Sigmoid colon (tissue), 7 donors: ENCODE measurements at regions of chr9 and their contacts with region 1.

Region 1: DNA sequence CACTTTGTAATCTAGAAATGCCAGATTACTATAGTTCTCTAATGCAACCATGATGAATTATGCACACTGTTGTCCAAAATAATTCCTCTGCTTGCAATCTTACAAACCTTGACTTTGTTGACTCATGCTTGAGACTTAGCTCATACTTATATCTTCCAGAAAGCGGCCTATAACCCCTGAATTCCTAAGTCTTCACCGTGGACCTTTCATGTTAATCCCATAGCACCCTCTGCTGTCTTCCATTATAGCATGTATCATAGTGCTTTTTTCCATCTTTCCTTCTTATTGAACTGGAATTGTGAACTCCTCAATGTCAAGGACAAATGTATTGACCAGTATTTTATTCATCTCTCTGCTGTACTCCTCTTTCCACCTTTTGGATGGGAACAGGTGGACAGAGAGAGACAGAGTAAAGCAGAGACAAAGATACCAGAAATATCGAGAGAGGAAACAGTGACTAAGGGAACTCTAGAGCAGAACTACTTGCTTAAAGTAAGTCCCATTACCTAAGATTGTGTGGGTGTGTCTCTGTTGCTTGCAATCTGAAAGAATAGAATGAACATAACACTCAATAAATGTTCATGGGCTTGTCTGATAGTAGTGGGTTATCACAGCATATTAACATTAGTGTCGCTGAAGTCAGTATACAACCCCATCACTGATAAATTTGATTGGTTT is 110.1 kb downstream of the LURAP1L start:
- DNase-seq: no peak
- H3K4me3 ChIP-seq: no peak overlapping the region
- H3K27ac ChIP-seq: peak overlapping the region in 1 of 4 donors; percentile 12
- H3K4me1 ChIP-seq: peaks cover 0 to 37% (median 24%) of the 10 kb centered on the region in 4 donors
- H3K27me3 ChIP-seq: no peaks in the 10 kb centered on the region
- CTCF ChIP-seq: peak; percentile 58 to 86 (median 68)
- EP300 ChIP-seq: no peak
- POLR2A ChIP-seq: no peak

Region 2: GRCh38 chr9:12723409-12724028 is 161.4 kb before region 1 on chr9:
- intact Hi-C with region 1: loop called (anchors 2 kb)
- DNase-seq: no peak
- H3K4me3 ChIP-seq: no peak overlapping the region
- H3K27ac ChIP-seq: peak overlapping the region in 1 of 4 donors; percentile 28
- H3K4me1 ChIP-seq: peaks cover 0 to 14% (median 0%) of the 10 kb centered on the region in 4 donors
- H3K27me3 ChIP-seq: no peaks in the 10 kb centered on the region
- CTCF ChIP-seq: peak; percentile 15 to 60 (median 53)
- EP300 ChIP-seq: no peak
- POLR2A ChIP-seq: no peak

Region 3: DNA sequence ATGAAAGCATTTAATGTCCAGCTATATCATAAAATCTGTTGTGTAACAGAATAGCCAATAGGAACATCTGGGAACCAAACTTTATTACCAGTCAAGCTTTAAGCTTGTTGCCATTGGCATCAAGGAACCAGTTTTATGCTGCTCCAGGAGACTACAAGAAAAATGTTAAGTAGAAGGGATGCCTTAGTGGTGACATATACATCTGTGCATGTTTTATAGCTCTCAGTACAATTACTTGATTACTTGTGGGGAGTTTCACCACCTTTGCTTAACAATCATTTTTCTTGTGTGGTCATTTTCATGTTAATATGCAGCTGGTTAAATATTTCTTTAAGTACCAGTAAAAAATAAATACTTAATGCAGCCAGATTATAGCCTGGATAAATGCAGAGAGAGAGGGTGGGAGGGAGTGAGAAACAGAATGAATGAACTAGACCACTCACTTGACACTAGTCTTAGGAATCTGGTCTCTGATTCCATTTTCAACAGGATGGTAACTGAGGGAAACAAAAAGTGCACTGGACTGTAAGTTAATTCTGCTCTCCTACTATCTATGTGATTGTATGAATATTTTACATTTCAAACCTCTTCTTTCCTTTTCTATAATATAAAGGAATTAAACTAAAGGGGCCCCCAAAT is 145.7 kb before region 1 on chr9:
- intact Hi-C with region 1: no loop called
- DNase-seq: no peak
- H3K4me3 ChIP-seq: no peak overlapping the region
- H3K27ac ChIP-seq: no peak overlapping the region
- H3K4me1 ChIP-seq: no peaks in the 10 kb centered on the region
- H3K27me3 ChIP-seq: no peaks in the 10 kb centered on the region
- CTCF ChIP-seq: no peak
- EP300 ChIP-seq: no peak
- POLR2A ChIP-seq: no peak

Region 4: DNA sequence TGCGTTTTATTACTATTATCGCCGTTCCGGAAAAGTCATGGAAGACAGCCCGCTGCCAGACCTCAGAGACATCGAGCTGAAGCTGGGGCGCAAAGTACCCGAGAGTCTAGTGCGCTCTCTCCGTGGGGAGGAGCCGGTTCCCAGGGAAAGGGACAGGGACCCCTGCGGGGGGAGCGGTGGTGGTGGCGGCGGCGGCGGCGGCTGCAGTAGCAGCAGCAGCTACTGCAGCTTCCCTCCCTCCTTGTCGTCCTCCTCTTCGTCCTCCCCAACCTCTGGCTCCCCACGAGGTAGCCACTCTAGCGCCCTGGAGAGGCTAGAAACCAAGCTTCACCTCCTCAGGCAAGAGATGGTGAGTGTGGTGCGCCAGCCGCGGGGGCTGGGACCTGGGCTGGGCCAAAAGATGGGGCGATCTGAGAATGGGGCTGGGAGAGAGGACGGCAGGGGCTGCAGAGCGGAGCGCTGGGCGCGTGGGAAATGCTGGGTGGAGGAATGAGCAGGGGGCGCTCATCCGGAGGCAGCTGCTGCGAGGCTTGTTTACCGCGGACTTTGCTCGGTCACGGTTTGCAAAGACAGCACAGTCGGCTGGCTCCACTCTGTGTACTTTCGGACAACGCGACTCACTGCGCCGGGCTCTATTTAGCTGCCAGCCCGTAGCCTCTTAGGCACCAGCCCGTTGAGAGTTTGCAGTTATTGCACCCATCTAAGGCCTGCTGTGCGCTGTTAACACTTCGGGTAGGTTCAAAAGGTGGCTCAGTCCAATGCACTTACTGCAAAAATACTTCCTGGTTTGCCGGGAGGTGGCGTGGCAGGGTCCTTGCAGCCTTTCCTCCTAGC is 109.0 kb before region 1 on chr9:
- intact Hi-C with region 1: loop called (anchors 1 kb)
- DNase-seq: peak; percentile 67
- H3K4me3 ChIP-seq: peak overlapping the region; percentile 76 to 89 (median 82)
- H3K27ac ChIP-seq: peak overlapping the region; percentile 89 to 97 (median 94)
- H3K4me1 ChIP-seq: peaks cover 0 to 38% (median 23%) of the 10 kb centered on the region in 4 donors
- H3K27me3 ChIP-seq: no peaks in the 10 kb centered on the region
- CTCF ChIP-seq: peak; percentile 48 to 59 (median 54)
- EP300 ChIP-seq: no peak
- POLR2A ChIP-seq: no peak

Region 5: DNA sequence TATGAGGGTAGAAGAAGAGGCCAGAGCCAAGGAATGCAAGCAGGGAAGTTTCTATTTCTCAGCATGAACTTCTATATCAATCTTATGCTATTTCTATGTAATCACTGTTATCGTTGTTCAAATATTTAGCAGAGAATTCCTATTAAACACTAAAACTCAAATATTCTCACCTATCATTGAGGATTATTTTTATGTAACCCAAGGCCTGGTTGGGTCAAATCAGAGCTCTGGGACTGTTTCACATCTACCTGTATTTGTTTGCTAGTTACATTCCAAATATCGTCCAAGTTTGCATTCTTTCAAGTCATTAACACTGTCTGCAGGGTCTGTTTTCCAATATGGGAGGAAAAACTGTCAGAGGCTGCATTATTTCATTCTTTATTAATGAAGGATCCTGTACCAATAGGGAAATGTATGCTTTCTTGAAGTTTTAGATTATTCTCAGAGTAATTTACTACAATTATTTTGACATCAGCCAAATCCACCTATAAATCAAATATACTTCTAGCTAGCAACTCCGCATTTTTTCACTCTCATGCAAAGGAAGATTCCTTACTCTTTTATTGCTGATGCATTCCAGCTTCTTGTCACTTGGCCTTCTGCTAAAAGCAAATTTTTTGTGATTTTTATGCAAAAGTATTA is 57.8 kb before region 1 on chr9:
- intact Hi-C with region 1: loop called (anchors 5 kb)
- DNase-seq: no peak
- H3K4me3 ChIP-seq: no peak overlapping the region
- H3K27ac ChIP-seq: peak overlapping the region in 2 of 4 donors; percentile 27 to 28
- H3K4me1 ChIP-seq: peaks cover 0 to 49% (median 22%) of the 10 kb centered on the region in 4 donors
- H3K27me3 ChIP-seq: no peaks in the 10 kb centered on the region
- CTCF ChIP-seq: no peak
- EP300 ChIP-seq: no peak
- POLR2A ChIP-seq: no peak

Region 6: DNA sequence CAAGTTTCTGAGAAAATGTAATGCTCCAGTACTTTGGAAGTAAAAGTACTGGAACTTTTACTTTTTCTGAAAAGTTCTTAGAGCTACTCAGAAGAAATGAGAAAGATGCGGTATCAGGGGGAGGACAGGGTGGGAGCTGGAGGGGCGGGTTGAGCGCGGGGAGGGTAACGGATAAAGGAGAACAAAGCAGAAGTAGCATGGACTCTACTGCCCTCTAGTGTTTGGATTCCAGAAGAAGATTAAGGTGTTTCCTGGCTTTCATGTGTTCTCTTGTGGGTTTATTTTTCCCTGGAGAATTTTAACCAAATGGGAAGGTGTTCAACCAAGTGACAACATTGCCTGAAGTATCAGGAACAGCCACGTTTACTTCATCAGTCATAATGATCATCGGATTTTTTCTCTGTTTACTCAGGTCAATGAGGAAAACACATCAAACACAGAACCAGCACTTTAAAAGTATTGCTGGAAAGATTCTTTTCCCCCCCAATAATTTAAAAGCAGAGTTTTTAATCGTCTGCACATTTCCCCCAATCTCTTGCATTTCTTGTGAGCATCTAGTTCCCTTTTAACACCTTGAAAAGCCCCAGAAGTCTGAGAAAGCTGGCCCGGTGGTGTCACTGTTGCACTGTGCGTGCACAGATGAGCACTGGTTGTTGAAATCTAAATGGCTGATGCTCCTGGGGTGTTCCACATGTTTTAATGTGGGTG is 204.0 kb after region 1 on chr9:
- intact Hi-C with region 1: loop called (anchors 5 kb)
- DNase-seq: no peak
- H3K4me3 ChIP-seq: no peak overlapping the region
- H3K27ac ChIP-seq: no peak overlapping the region
- H3K4me1 ChIP-seq: no peaks in the 10 kb centered on the region
- H3K27me3 ChIP-seq: no peaks in the 10 kb centered on the region
- CTCF ChIP-seq: peak; percentile 27 to 78 (median 54)
- EP300 ChIP-seq: no peak
- POLR2A ChIP-seq: no peak